ENCODE measurements at regions of chr20 and their contacts with region 1.

Region 1: GRCh38 chr20:10179574-10180298 is 38.9 kb upstream of the SNAP25 start:
- DNase-seq: no peak
- ATAC-seq: no peak
- H3K4me3 ChIP-seq: no peak overlapping the region
- H3K27ac ChIP-seq: no peak overlapping the region
- H3K4me1 ChIP-seq: peaks cover 0 to 4% (median 0%) of the 10 kb centered on the region in 4 donors
- H3K27me3 ChIP-seq: no peaks in the 10 kb centered on the region
- CTCF ChIP-seq: peak in 1 of 4 donors; percentile 33
- POLR2A ChIP-seq: no peak

Region 2: DNA sequence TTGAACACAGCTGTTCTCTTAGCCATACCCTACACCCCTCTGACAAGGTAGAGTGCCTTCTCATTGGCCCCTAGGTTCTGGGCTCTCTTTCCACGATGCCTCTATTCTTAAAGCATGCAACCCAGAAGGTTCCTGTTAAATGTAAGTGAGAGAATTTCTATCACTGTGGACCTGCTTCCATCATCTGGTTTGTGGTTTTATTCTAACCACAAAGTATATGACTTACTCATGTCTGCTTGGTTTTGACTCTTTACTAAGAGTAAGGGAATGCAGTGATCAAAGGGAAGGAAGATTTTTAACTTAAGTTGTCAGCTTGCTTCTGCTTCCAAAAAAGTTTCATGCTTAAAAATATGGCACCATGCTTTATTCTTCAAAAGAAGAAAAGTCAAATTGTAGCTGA is 64.7 kb before region 1 on chr20:
- intact Hi-C with region 1: loop called in 1 of 2 experiments (anchors 10 kb)
- DNase-seq: no peak
- ATAC-seq: no peak
- H3K4me3 ChIP-seq: no peak overlapping the region
- H3K27ac ChIP-seq: no peak overlapping the region
- H3K4me1 ChIP-seq: peaks cover 0 to 23% (median 10%) of the 10 kb centered on the region in 4 donors
- H3K27me3 ChIP-seq: no peaks in the 10 kb centered on the region
- CTCF ChIP-seq: no peak
- POLR2A ChIP-seq: no peak

Measured in right lobe of liver (tissue), 6 donors.